ENCODE measurements at regions of chr3 and their contacts with region 1.

Region 1: GRCh38 chr3:183468424-183468823 is 40.0 kb upstream of the MCF2L2 start:
- DNase-seq: no peak
- ATAC-seq: no peak
- H3K4me3 Mint-ChIP-seq: no peak overlapping the region
- H3K27ac Mint-ChIP-seq: no peak overlapping the region
- H3K4me1 Mint-ChIP-seq: peaks cover 17% of the 10 kb centered on the region
- H3K27me3 Mint-ChIP-seq: peaks cover 3% of the 10 kb centered on the region

Region 2: GRCh38 chr3:183481582-183481981 is 13.2 kb after region 1 on chr3:
- CTCF ChIA-PET with region 1: interaction called, 10 read pairs
- POLR2A ChIA-PET with region 1: no interaction called
- DNase-seq: no peak
- ATAC-seq: no peak
- H3K4me3 Mint-ChIP-seq: no peak overlapping the region
- H3K27ac Mint-ChIP-seq: no peak overlapping the region
- H3K4me1 Mint-ChIP-seq: peaks cover 3% of the 10 kb centered on the region
- H3K27me3 Mint-ChIP-seq: no peaks in the 10 kb centered on the region

Measured in activated CD8-positive, alpha-beta T cell treated with anti-CD3 and anti-CD28 coated beads, Interleukin-2, amount 10 ng/mL, durations not matched to agents 7 days and 5 days (primary cell).